AG04450 (cell line): ENCODE measurements at regions of chr5 and their contacts with region 1.

Region 1: DNA sequence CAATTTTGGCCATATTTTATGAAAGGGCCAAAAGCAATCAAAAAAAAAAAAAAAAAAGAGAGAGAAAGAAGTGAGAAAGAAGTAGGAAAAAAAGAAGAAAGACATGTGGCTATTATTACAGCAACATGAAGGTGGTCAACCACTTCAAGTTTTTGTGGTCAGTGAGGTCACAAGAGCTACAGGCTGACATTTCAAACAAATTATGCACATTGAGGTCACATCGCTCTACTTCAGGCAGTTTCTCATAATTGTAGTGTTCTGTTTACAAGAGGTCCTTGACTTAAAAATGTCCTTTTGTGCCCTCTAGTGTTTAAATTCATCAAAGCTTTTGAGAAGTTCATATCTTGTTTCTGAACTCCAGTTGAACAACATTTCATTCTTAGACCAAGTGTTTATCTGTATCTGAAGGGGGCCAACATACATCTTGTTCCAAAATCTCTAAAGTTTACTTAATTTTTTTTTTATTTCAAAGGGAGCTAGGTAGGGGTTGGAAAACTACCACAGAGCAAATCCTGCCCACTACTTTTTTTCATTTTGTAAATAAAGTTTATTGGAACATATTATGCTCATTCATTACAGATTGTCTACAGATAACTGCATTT is 513.1 kb downstream of the PDE4D start:
- DNase-seq: peak; percentile 21
- H3K4me3 ChIP-seq: no peak overlapping the region
- H3K27ac ChIP-seq: no peak overlapping the region
- H3K27me3 ChIP-seq: no peaks in the 10 kb centered on the region
- CTCF ChIP-seq: peak; percentile 57

Region 2: GRCh38 chr5:59193616-59194319 is 186.7 kb before region 1 on chr5:
- CTCF ChIA-PET with region 1: interaction called, 225 read pairs
- POLR2A ChIA-PET with region 1: no interaction called
- DNase-seq: no peak
- H3K4me3 ChIP-seq: no peak overlapping the region
- H3K27ac ChIP-seq: no peak overlapping the region
- H3K27me3 ChIP-seq: no peaks in the 10 kb centered on the region
- CTCF ChIP-seq: no peak

Region 3: GRCh38 chr5:59212596-59212995 is 167.9 kb before region 1 on chr5:
- CTCF ChIA-PET with region 1: interaction called, 27 read pairs
- POLR2A ChIA-PET with region 1: no interaction called
- DNase-seq: no peak
- H3K4me3 ChIP-seq: no peak overlapping the region
- H3K27ac ChIP-seq: no peak overlapping the region
- H3K27me3 ChIP-seq: peaks cover 2% of the 10 kb centered on the region
- CTCF ChIP-seq: no peak

Region 4: GRCh38 chr5:59218424-59219045 is 161.9 kb before region 1 on chr5:
- CTCF ChIA-PET with region 1: interaction called, 27 read pairs
- POLR2A ChIA-PET with region 1: no interaction called
- DNase-seq: no peak
- H3K4me3 ChIP-seq: no peak overlapping the region
- H3K27ac ChIP-seq: no peak overlapping the region
- H3K27me3 ChIP-seq: peaks cover 2% of the 10 kb centered on the region
- CTCF ChIP-seq: peak; percentile 37

Region 5: DNA sequence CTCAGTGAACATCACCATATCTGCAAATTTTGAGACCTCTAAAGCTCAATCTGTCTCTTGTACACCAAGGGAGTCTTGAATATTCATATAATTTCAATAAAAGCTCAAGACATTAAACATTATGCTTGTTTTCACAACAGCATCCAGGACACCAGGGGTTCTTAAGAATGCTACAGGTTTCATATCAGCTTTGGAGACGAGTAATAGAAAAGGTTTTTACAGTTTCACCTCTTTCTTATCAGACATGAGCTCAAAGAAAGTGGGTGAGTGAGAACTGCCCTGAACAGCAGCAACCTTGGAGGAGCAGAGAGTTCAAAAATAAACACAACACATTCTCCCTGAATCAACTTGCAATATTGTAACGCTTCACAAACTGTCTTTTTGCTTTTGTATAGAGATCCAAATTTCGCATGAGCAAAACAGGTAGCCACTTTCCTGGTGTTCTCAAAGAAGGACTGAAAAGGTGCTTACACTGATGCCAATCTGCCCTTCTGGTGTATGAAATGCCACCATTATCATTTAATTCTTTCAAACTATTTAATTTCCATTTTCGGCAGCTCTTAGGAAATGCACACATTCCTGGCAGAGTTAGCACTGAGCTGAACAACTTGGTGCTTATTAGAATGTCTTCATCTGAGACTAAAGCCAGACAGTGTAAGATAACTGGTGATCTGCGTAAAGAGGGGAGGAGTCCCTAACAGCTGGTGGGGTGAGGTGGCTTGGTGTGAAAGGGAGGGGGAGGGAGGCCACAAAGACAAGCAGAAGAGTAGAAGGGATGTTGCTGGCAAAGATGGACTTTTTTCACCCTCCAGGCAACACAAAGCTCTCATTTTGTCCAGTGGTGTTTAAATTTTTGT is 22.2 kb before region 1 on chr5:
- CTCF ChIA-PET with region 1: interaction called, 67 read pairs
- POLR2A ChIA-PET with region 1: no interaction called
- DNase-seq: no peak
- H3K4me3 ChIP-seq: no peak overlapping the region
- H3K27ac ChIP-seq: no peak overlapping the region
- H3K27me3 ChIP-seq: no peaks in the 10 kb centered on the region
- CTCF ChIP-seq: no peak